ENCODE measurements at regions of chr13 and their contacts with region 1.

Region 1: GRCh38 chr13:39616087-39616694 is 13.2 kb upstream of the LHFPL6 start:
- DNase-seq: peak in 2 of 4 donors; percentile 66 to 84
- ATAC-seq: peak; percentile 95
- H3K4me3 ChIP-seq: no peak overlapping the region
- H3K27ac ChIP-seq: no peak overlapping the region
- H3K4me1 ChIP-seq: peaks cover 0 to 5% of the 10 kb centered on the region in 2 donors
- H3K27me3 ChIP-seq: no peaks in the 10 kb centered on the region
- CTCF ChIP-seq: peak; percentile 68 to 89

Region 2: DNA sequence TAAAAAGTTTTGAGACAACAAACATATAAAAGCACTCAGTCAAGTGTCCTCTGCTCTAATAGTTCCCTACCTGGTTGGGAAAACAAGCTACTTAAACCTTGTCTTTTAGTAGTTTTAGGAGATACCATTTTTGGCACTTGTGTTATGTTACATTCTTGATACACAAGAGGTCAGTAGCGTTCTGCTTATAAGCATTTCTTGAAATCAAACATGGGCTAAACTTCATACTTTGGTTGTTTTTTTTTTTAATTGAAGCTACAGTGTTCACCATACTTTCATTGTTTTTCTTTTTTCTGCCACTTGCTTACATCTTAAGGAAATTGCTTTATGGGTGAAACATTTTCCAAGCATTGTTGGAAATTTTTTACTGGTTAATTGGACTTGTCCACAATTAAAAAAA is 565.0 kb before region 1 on chr13:
- intact Hi-C with region 1: loop called in 1 of 2 experiments (anchors 10 kb)
- DNase-seq: peak in 1 of 4 donors; percentile 56
- ATAC-seq: peak; percentile 59
- H3K4me3 ChIP-seq: no peak overlapping the region
- H3K27ac ChIP-seq: no peak overlapping the region
- H3K4me1 ChIP-seq: no peaks in the 10 kb centered on the region
- H3K27me3 ChIP-seq: no peaks in the 10 kb centered on the region
- CTCF ChIP-seq: peak in 1 of 2 donors; percentile 21

Region 3: DNA sequence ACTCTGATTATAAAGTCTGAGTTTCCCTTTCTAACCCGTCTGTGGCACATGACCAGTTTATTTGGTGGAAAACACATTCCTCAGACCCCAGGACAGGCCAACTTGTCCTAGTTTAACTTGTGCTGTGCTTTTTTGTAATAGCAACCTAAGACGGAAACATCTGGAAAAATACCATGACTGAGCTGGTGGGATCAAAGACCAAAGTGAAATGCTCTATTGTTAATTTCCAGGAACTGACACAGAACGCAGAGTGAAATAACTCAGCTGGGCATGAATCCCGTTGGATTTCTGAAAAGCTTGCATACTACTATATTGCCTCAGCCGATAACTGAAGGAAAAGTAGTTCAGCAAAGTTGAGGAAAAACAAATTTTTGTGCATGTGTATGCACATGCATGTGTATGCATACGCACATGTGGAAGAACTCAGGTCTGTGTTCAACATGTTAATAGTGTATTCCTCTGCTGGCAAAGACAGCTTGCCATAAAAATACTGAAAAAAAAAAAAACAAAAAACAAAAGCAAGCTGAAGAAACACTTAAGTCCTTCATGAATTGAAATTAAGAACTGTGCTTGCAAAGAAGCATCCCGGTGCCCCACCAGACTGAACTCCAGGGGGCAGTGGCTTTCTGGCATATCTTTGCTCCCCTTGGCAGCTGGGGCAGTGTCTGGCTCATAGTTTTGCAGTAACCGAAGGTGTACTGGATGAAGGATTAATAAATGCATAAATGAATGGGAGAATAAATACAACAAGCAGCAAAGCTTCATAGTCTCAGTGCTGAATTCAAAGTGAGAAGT is 201.0 kb before region 1 on chr13:
- intact Hi-C with region 1: loop called in 1 of 2 experiments (anchors 10 kb)
- DNase-seq: peak in 2 of 4 donors; percentile 59 to 76
- ATAC-seq: peak; percentile 86
- H3K4me3 ChIP-seq: no peak overlapping the region
- H3K27ac ChIP-seq: peak overlapping the region in 1 of 2 donors; percentile 10
- H3K4me1 ChIP-seq: peaks cover 0 to 18% of the 10 kb centered on the region in 2 donors
- H3K27me3 ChIP-seq: no peaks in the 10 kb centered on the region
- CTCF ChIP-seq: peak; percentile 23 to 46